GM12878 (cell line): ENCODE measurements at regions of chr13 and their contacts with region 1.

Region 1: GRCh38 chr13:41019011-41019487 is at the start of gene ELF1:
- DNase-seq: peak; percentile 88
- ATAC-seq: peak; percentile 79
- H3K4me3 ChIP-seq: peak within 1 kb of the TSS; percentile 90
- H3K27ac ChIP-seq: peak within 1 kb of the TSS; percentile 100
- H3K4me1 ChIP-seq: peaks cover 7% of the 10 kb centered on the region
- H3K27me3 ChIP-seq: no peaks in the 10 kb centered on the region
- CTCF ChIP-seq: no peak
- EP300 ChIP-seq: peak; percentile 78 to 95
- POLR2A ChIP-seq: peak; percentile 47
- RAD21 ChIP-seq: 0 out of 2 replicates have a peak, but pooled peaks have one; percentile 13
- polyA plus RNA-seq, gene ELF1: 43.3 to 43.5 TPM

Region 2: GRCh38 chr13:40969169-40969901 is 49.7 kb before region 1 on chr13:
- CTCF ChIA-PET with region 1: interaction called, 39 read pairs
- POLR2A ChIA-PET with region 1: interaction called, 12 read pairs
- RAD21 ChIA-PET with region 1: interaction called, 62 read pairs
- SMC1A ChIA-PET with region 1: interaction called, 59 read pairs
- in situ Hi-C with region 1: no loop called
- intact Hi-C with region 1: loop called (anchors 2 kb)
- DNase-seq: no peak
- ATAC-seq: peak; percentile 71
- H3K4me3 ChIP-seq: no peak overlapping the region
- H3K27ac ChIP-seq: peak overlapping the region; percentile 20; the same call in 1 of the 2 replicates
- H3K4me1 ChIP-seq: peaks cover 50% of the 10 kb centered on the region
- H3K27me3 ChIP-seq: no peaks in the 10 kb centered on the region
- CTCF ChIP-seq: no peak
- EP300 ChIP-seq: no peak; a peak in 1 of 4 replicates
- POLR2A ChIP-seq: no peak
- RAD21 ChIP-seq: no peak